Heart right ventricle (tissue), 16 donors: ENCODE measurements at regions of chr1 and their contacts with region 1.

Region 1: GRCh38 chr1:61887076-61887867 is 145.0 kb downstream of the PATJ start:
- DNase-seq: no peak
- ATAC-seq: peak; percentile 37 to 86 (median 67)
- H3K4me3 ChIP-seq: no peak overlapping the region
- H3K27ac ChIP-seq: peak overlapping the region in 8 of 10 donors; percentile 2 to 65 (median 50)
- H3K4me1 ChIP-seq: peaks cover 0 to 21% (median 12%) of the 10 kb centered on the region in 9 donors
- H3K27me3 ChIP-seq: no peaks in the 10 kb centered on the region
- CTCF ChIP-seq: no peak

Region 2: GRCh38 chr1:61872206-61872605 is 15.1 kb before region 1 on chr1:
- intact Hi-C with region 1: loop called in 1 of 10 experiments (anchors 1 kb)
- DNase-seq: no peak
- ATAC-seq: no peak
- H3K4me3 ChIP-seq: no peak overlapping the region
- H3K27ac ChIP-seq: no peak overlapping the region
- H3K4me1 ChIP-seq: peaks cover 0 to 9% (median 0%) of the 10 kb centered on the region in 9 donors
- H3K27me3 ChIP-seq: no peaks in the 10 kb centered on the region
- CTCF ChIP-seq: no peak

Region 3: DNA sequence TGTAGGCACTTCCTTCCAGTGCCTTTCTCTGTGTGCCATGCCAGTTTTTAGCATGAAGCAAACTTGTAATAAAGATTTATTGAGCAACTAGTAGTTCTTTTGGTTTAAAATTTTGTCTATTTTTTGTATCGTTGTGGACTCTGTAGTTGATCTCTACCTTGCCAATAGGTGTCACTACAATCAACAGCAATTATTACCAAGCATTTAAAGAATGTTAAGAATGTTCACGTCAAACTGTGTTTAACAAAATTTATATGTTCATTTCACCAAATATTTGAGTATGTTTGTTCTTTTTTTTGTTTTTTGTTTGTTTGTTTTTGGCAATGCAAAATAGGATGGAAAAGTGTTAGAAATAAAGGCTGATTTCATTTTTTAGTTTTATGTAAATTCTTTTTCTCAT is 63.1 kb after region 1 on chr1:
- intact Hi-C with region 1: loop called in 1 of 10 experiments (anchors 10 kb)
- DNase-seq: no peak
- ATAC-seq: no peak
- H3K4me3 ChIP-seq: no peak overlapping the region
- H3K27ac ChIP-seq: peak overlapping the region in 5 of 10 donors; percentile 73 to 86 (median 80)
- H3K4me1 ChIP-seq: peaks cover 0 to 13% (median 0%) of the 10 kb centered on the region in 9 donors
- H3K27me3 ChIP-seq: no peaks in the 10 kb centered on the region
- CTCF ChIP-seq: peak in 8 of 9 donors; percentile 11 to 52 (median 36)